Breast epithelium (tissue), 4 donors: ENCODE measurements at regions of chr20 and their contacts with region 1.

Region 1: GRCh38 chr20:36384022-36384619 is 78.0 kb downstream of the DLGAP4 start:
- DNase-seq: no peak
- H3K4me3 ChIP-seq: no peak overlapping the region
- H3K27ac ChIP-seq: no peak overlapping the region
- H3K4me1 ChIP-seq: no peaks in the 10 kb centered on the region
- H3K27me3 ChIP-seq: no peaks in the 10 kb centered on the region
- CTCF ChIP-seq: no peak
- POLR2A ChIP-seq: no peak

Region 2: GRCh38 chr20:35547329-35547728 is 836.8 kb before region 1 on chr20:
- intact Hi-C with region 1: loop called (anchors 5 kb)
- DNase-seq: no peak
- H3K4me3 ChIP-seq: no peak overlapping the region
- H3K27ac ChIP-seq: no peak overlapping the region
- H3K4me1 ChIP-seq: no peaks in the 10 kb centered on the region
- H3K27me3 ChIP-seq: no peaks in the 10 kb centered on the region
- CTCF ChIP-seq: no peak
- POLR2A ChIP-seq: no peak

Region 3: GRCh38 chr20:36141310-36141709 is 242.8 kb before region 1 on chr20:
- intact Hi-C with region 1: no loop called
- DNase-seq: no peak
- H3K4me3 ChIP-seq: no peak overlapping the region
- H3K27ac ChIP-seq: no peak overlapping the region
- H3K4me1 ChIP-seq: no peaks in the 10 kb centered on the region
- H3K27me3 ChIP-seq: no peaks in the 10 kb centered on the region
- CTCF ChIP-seq: no peak
- POLR2A ChIP-seq: no peak

Region 4: DNA sequence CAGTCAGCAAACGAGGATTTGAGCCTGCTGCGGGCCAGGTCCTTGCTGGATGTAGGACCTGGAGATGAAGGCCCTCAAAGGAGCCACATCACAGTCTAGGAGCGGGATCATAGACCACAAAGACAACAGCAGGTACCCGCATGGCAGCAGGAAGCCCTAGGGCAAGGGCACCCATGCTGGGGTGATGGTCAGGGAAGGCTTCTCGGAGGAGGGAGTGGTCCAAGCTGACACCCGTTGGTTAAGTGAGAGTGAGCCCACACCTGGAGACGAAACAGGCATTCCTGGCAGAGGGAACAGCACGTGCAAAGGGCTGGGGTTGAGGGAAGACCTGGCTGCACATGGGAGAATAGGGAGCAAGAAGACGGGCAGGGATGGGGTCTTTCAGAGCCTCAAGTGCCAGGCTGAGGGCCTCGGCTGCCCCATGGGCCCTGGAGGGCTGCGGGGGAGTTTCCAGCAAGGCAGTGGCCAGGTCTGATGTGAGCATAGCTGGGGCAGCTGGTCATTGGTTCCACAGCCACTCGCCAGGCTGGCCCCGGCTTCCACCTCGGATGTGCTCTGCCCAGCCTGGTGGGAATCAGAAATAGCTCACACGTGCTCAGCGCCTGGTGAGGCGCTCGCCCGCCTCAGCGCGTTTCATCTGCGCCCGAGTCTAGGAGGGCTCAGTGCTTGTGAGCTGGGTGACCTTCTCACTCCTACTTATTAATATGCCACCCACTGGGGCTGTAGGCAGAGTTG is 63.0 kb before region 1 on chr20:
- intact Hi-C with region 1: loop called (anchors 2 kb)
- DNase-seq: no peak
- H3K4me3 ChIP-seq: no peak overlapping the region
- H3K27ac ChIP-seq: no peak overlapping the region
- H3K4me1 ChIP-seq: no peaks in the 10 kb centered on the region
- H3K27me3 ChIP-seq: no peaks in the 10 kb centered on the region
- CTCF ChIP-seq: no peak
- POLR2A ChIP-seq: no peak